T-cell (primary cell): ENCODE measurements at regions of chr2 and their contacts with region 1.

Region 1: DNA sequence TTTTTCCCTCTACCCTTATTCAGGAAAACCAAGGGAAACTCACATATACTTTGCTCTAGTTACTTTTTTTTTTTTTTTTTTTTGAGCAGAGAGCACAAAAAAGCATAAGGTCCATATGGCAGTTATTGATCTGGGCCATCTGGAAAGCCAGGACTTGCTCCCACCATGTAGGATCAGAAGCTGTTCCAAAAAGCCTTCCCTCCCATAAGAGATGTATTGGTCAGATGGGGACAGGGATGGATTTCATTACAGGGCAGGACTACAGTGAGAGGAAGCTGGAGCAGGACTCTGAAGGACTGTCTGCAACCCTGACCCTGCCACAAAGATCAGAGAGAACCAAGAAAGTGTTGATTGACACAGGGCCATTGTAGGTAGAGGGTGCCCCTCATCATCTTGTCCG is 57.3 kb downstream of the NRP2 start:
- DNase-seq: no peak
- ATAC-seq: no peak
- H3K4me3 ChIP-seq: no peak overlapping the region
- H3K4me3 Mint-ChIP-seq: no peak overlapping the region
- H3K27ac ChIP-seq: no peak overlapping the region
- H3K27ac Mint-ChIP-seq: no peak overlapping the region
- H3K4me1 ChIP-seq: no peaks in the 10 kb centered on the region
- H3K4me1 Mint-ChIP-seq: no peaks in the 10 kb centered on the region
- H3K27me3 ChIP-seq: peaks cover 0 to 9% of the 10 kb centered on the region in 2 experiments
- H3K27me3 Mint-ChIP-seq: peaks cover 11 to 16% of the 10 kb centered on the region in 2 donors

Region 2: DNA sequence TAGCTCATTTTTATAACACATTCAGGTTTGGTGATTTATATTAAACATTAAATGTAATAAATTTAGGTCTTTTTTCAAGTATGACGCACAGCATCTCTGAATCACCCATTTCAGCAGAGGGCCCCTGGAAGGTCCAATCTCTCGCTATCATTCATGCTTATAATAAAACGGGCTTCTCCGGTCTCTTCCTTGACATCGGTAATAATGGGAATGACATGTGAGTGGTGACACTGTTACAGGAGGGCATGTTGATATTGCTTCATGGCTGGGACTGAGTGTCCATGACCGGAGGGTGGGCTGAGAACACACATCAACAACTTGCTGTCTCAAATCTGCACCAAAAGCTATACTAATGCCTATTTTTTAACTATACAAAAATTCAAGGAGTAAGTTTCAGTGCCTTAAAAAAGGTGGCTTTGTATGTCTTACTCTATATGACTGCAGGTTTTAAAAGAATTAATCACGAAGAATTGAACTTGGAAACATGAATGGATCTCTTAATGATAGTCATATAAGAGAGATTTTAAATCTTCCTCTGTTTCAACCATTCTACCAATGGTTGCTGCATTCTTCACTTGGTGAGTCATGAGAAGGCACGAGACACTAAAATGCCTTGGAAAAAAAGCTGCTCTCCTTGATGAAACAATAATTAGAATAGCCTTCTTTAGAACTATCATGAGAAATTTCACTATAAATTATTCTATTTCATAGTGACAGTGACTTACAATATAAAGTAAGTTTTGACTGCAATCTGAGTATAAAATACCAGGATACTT is 159.2 kb before region 1 on chr2:
- CTCF ChIA-PET with region 1: no interaction called
- POLR2A ChIA-PET with region 1: no interaction called
- DNase-seq: no peak
- ATAC-seq: no peak
- H3K4me3 ChIP-seq: no peak overlapping the region
- H3K4me3 Mint-ChIP-seq: no peak overlapping the region
- H3K27ac ChIP-seq: no peak overlapping the region
- H3K27ac Mint-ChIP-seq: no peak overlapping the region
- H3K4me1 ChIP-seq: no peaks in the 10 kb centered on the region
- H3K4me1 Mint-ChIP-seq: no peaks in the 10 kb centered on the region
- H3K27me3 ChIP-seq: no peaks in the 10 kb centered on the region
- H3K27me3 Mint-ChIP-seq: peaks cover 2 to 11% of the 10 kb centered on the region in 2 donors

Region 3: DNA sequence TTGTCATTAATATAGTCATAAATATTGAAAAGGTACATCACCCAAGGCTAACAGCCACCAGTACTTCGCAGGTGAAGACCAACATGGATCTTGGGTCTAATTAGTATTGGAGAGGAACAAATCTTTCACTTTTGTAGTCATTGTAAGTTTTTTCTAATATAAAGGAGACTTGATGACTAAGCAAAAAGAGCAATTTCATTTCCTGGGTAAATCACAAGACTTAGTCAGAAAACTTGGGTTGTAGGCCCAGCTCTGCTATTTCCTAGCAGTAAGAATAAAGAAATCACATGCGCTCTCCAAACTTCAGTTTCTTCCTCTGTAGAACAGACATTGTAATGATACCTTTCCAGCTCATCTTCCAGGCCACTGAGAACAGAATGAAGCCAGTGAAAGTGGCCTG is 16.4 kb before region 1 on chr2:
- CTCF ChIA-PET with region 1: no interaction called
- POLR2A ChIA-PET with region 1: no interaction called
- DNase-seq: no peak
- ATAC-seq: no peak
- H3K4me3 ChIP-seq: no peak overlapping the region
- H3K4me3 Mint-ChIP-seq: no peak overlapping the region
- H3K27ac ChIP-seq: no peak overlapping the region
- H3K27ac Mint-ChIP-seq: no peak overlapping the region
- H3K4me1 ChIP-seq: no peaks in the 10 kb centered on the region
- H3K4me1 Mint-ChIP-seq: no peaks in the 10 kb centered on the region
- H3K27me3 ChIP-seq: no peaks in the 10 kb centered on the region
- H3K27me3 Mint-ChIP-seq: peaks cover 0 to 2% of the 10 kb centered on the region in 2 donors

Region 4: DNA sequence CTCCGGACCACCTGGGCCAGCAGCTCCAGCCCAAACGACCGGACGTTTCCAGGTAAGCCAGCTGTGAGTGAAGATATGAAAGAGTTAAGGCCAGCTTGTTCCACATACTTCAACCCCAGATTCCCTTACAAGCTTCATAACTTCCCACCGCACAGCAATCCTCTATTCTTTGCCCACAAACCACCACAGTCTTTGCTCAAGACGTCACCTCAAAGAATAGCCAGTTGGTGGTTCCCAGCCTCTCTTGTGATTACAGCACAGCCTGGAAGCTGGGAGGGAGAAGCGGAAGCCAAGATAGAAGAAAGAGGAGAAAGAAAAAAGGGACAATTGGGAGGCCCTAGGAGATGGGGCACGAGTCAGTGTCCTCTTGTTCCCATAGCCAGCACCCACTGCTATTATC is 13.3 kb after region 1 on chr2:
- CTCF ChIA-PET with region 1: no interaction called
- POLR2A ChIA-PET with region 1: interaction called in 1 of 2 experiments, 12 read pairs
- DNase-seq: no peak
- ATAC-seq: no peak
- H3K4me3 ChIP-seq: no peak overlapping the region
- H3K4me3 Mint-ChIP-seq: no peak overlapping the region
- H3K27ac ChIP-seq: no peak overlapping the region
- H3K27ac Mint-ChIP-seq: no peak overlapping the region
- H3K4me1 ChIP-seq: no peaks in the 10 kb centered on the region
- H3K4me1 Mint-ChIP-seq: no peaks in the 10 kb centered on the region
- H3K27me3 ChIP-seq: peaks cover 0 to 13% of the 10 kb centered on the region in 2 experiments
- H3K27me3 Mint-ChIP-seq: peaks cover 7 to 16% of the 10 kb centered on the region in 2 donors

Region 5: GRCh38 chr2:206642075-206643025 is 902.7 kb after region 1 on chr2 and contains the start of gene FAM237A:
- CTCF ChIA-PET with region 1: no interaction called
- POLR2A ChIA-PET with region 1: no interaction called
- DNase-seq: peak in 2 of 35 experiments; percentile 2 to 24
- ATAC-seq: no peak
- H3K4me3 ChIP-seq: no peak within 1 kb of the TSS
- H3K4me3 Mint-ChIP-seq: no peak within 1 kb of the TSS
- H3K27ac ChIP-seq: no peak within 1 kb of the TSS
- H3K27ac Mint-ChIP-seq: no peak within 1 kb of the TSS
- H3K4me1 ChIP-seq: no peaks in the 10 kb centered on the region
- H3K4me1 Mint-ChIP-seq: no peaks in the 10 kb centered on the region
- H3K27me3 ChIP-seq: peaks cover 16 to 19% of the 10 kb centered on the region in 2 experiments
- H3K27me3 Mint-ChIP-seq: peaks cover 13 to 19% of the 10 kb centered on the region in 2 donors
- total RNA-seq, gene FAM237A: not detected